HCT116 (cell line): ENCODE measurements at regions of chr14 and their contacts with region 1.

Region 1: DNA sequence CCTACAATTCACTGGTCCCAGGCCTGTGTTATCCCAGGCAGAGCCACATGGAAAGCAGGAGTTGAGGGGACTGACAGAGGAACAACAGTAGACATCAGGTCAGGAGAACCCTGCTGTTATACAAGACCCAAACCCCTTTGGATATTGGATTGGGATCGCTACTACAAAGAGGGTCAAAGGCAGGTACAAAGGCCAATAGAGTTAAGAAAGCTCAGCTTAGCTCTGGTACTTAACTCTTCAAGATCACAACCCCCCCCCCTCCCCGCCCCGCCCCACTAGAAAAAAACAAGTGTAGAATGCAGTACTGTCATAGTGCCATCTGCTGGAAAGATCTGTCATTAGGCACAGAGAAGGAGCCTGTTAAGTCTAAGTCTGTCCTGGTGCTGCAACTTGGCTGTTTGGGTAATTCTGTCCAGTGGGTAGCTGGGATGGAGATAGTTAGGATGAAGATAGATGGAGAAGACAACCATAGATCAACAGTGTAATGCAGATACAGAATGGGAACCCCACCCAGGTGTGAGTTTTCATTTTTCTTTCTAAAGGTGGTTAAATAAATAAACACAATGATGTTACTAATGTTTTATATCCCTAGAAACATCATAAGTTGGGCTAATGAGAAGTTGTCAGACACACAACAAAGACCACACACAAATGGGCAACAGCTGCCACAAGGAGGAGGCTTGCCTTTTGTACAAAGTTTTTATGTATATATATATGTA is 17.2 kb downstream of the REM2 start:
- DNase-seq: peak; percentile 70
- ATAC-seq: peak; percentile 87
- H3K4me3 ChIP-seq: no peak overlapping the region
- H3K27ac ChIP-seq: 0 out of 2 replicates have a peak overlapping the region, but pooled peaks have one; percentile 17
- H3K4me1 ChIP-seq: peaks cover 0 to 22% of the 10 kb centered on the region in 2 experiments; a peak in 2 of 4 replicates
- H3K27me3 ChIP-seq: no peaks in the 10 kb centered on the region
- CTCF ChIP-seq: peak; percentile 62 to 76 (median 67); a peak in 5 of 6 replicates
- POLR2A ChIP-seq: no peak
- RAD21 ChIP-seq: peak; percentile 68

Region 2: DNA sequence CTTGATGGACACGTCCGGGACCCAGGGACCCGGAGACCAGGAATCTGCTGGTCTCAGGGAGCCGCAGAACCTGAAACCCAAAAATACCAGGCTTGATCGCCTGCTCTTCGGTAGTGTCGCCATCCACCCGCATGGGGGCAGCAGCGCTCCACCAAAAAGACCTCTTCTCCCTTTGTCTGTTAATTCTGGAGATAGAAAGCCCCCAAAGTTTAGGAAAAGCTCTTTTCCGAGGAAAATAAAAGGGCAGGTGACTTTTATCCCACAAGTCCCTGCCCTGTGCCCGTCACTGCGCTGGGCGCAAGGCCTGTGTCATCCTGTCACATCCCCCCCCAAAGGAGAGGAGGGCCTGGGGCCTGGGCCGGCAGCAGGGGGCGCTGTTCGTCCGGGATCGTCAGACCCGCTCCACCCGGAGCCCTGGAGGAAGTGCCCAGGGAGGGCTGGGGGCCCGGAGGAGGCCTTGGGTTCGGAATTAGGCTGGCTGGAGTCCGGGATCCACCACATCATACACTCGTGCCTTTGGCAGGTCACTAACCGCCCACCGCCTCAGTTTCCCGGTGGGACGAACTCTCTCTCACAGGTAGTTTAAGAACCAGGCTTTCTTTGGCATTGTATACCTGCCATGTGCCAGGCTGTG is 343.1 kb before region 1 on chr14:
- CTCF ChIA-PET with region 1: interaction called, 4 read pairs
- POLR2A ChIA-PET with region 1: interaction called, 3 read pairs
- RAD21 ChIA-PET with region 1: no interaction called
- intact Hi-C with region 1: loop called (anchors 1 kb)
- DNase-seq: peak; percentile 48
- ATAC-seq: peak; percentile 92
- H3K4me3 ChIP-seq: 0 out of 4 replicates have a peak overlapping the region, but pooled peaks of 1 of the 2 experiments have one; percentile 23
- H3K27ac ChIP-seq: no peak overlapping the region
- H3K4me1 ChIP-seq: peaks cover 5 to 24% of the 10 kb centered on the region in 2 experiments
- H3K27me3 ChIP-seq: no peaks in the 10 kb centered on the region
- CTCF ChIP-seq: peak; percentile 95 to 100 (median 99)
- POLR2A ChIP-seq: no peak
- RAD21 ChIP-seq: peak; percentile 96

Region 3: GRCh38 chr14:22886500-22887259 is 13.6 kb before region 1 on chr14:
- CTCF ChIA-PET with region 1: interaction called, 11 read pairs
- POLR2A ChIA-PET with region 1: interaction called, 4 read pairs
- RAD21 ChIA-PET with region 1: no interaction called
- intact Hi-C with region 1: no loop called
- DNase-seq: peak; percentile 49
- ATAC-seq: peak; percentile 81
- H3K4me3 ChIP-seq: peak overlapping the region; percentile 60 to 68
- H3K27ac ChIP-seq: peak overlapping the region; percentile 93
- H3K4me1 ChIP-seq: peaks cover 31 to 43% of the 10 kb centered on the region in 2 experiments
- H3K27me3 ChIP-seq: no peaks in the 10 kb centered on the region
- CTCF ChIP-seq: no peak; a peak in 1 of 6 replicates
- POLR2A ChIP-seq: peak; percentile 66
- RAD21 ChIP-seq: no peak